ENCODE measurements at regions of chr18 and their contacts with region 1.

Region 1: GRCh38 chr18:55343396-55344073 is 244.5 kb downstream of the TCF4 start:
- DNase-seq: no peak
- H3K4me3 Mint-ChIP-seq: no peak overlapping the region
- H3K27ac Mint-ChIP-seq: no peak overlapping the region
- H3K4me1 Mint-ChIP-seq: no peaks in the 10 kb centered on the region
- H3K27me3 Mint-ChIP-seq: no peaks in the 10 kb centered on the region
- CTCF ChIP-seq: peak; percentile 32

Region 2: GRCh38 chr18:55781481-55781957 is 438.0 kb after region 1 on chr18:
- CTCF ChIA-PET with region 1: no interaction called
- intact Hi-C with region 1: loop called (anchors 5 kb)
- DNase-seq: peak; percentile 40
- H3K4me3 Mint-ChIP-seq: no peak overlapping the region
- H3K27ac Mint-ChIP-seq: no peak overlapping the region
- H3K4me1 Mint-ChIP-seq: no peaks in the 10 kb centered on the region
- H3K27me3 Mint-ChIP-seq: no peaks in the 10 kb centered on the region
- CTCF ChIP-seq: peak; percentile 50

Region 3: DNA sequence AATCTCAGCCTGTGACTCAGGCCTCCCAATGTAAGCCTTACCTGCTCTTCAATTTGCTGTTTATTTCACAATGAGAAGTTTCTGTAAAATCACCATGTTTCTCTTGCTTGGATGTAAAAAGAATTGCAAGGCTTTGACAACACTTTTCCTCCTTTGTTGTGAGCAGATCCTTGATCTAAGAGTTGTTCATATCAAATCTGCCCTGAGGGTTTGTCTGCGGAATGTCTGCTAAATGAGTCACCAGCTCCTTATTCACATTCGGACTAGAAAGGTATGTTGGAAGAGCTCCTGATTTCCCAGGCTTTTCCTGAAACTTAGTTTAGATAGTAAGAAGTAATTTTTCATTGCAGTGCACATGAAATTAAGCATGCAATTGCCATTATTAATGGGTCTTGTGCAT is 512.7 kb after region 1 on chr18:
- CTCF ChIA-PET with region 1: no interaction called
- intact Hi-C with region 1: loop called (anchors 10 kb)
- DNase-seq: peak; percentile 40
- H3K4me3 Mint-ChIP-seq: no peak overlapping the region
- H3K27ac Mint-ChIP-seq: no peak overlapping the region
- H3K4me1 Mint-ChIP-seq: peaks cover 22% of the 10 kb centered on the region
- H3K27me3 Mint-ChIP-seq: peaks cover 8% of the 10 kb centered on the region
- CTCF ChIP-seq: no peak

Region 4: DNA sequence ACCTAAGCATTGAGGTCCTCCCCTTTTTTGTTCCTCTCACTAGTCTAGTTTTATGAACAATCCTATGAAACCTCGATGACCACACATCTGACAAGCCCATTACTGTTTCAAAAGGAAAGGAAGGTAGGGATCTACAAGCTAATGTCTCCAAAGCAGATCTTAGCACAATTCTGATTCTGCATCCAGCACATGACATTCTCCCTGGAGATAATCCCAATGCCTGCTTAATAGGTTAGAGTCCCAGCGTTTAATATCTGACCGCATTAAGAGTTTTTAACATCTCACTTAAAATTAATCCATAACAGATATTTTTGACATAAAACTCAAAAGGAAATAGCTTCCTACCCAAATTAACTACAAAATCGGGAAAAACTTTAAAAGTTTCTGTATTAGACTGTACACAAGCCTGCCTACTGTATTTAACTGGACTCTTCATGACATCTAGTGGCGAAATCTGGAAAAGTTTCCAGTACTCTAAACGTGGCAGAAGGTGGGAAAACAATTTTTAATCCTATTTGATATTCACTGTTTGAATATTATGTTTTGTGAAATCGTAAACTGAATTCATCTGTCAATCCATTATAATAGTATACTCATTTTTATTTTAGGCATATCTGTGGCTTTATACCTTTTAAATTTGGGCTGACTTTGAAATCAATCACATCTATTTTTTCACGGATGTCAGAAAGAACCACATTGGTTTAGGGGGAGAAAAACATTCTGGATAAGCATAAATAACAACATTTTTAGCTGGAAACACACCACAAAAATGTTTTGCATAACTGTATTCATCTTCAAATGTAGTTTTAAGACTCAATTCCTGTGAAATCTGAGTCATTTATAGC is 1232.5 kb after region 1 on chr18:
- CTCF ChIA-PET with region 1: no interaction called
- intact Hi-C with region 1: loop called (anchors 5 kb)
- DNase-seq: peak; percentile 40
- H3K4me3 Mint-ChIP-seq: no peak overlapping the region
- H3K27ac Mint-ChIP-seq: no peak overlapping the region
- H3K4me1 Mint-ChIP-seq: no peaks in the 10 kb centered on the region
- H3K27me3 Mint-ChIP-seq: no peaks in the 10 kb centered on the region
- CTCF ChIP-seq: peak; percentile 67

Measured in Calu3 (cell line).